MCF 10A (cell line): ENCODE measurements at regions of chr3 and their contacts with region 1.

Region 1: GRCh38 chr3:3200632-3201212 is 21.2 kb upstream of the CRBN start:
- DNase-seq: peak; percentile 81
- H3K4me3 Mint-ChIP-seq: no peak overlapping the region
- H3K27ac Mint-ChIP-seq: no peak overlapping the region
- H3K4me1 Mint-ChIP-seq: no peaks in the 10 kb centered on the region
- H3K27me3 Mint-ChIP-seq: peaks cover 13% of the 10 kb centered on the region
- CTCF ChIP-seq: peak; percentile 80

Region 2: DNA sequence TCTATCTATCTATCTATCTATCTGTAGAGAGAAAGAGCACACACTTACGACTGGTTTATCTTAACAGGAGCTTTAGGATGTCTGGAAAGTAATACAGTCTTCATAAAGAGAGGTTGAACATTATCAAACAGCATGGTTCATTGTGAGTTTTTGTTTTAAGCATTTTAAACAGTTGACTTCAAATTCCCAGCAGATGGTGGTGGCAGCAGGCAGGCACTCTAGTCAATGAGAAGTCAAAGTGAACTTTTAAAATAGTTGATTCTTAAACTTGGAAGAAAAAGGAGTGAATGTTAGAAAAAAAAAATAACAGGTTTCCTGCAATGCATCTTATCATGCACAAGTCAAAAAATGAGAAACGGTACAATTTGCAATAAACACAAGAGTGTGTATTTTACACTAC is 523.2 kb before region 1 on chr3:
- CTCF ChIA-PET with region 1: no interaction called
- POLR2A ChIA-PET with region 1: no interaction called
- intact Hi-C with region 1: no loop called
- DNase-seq: no peak
- H3K4me3 Mint-ChIP-seq: no peak overlapping the region
- H3K27ac Mint-ChIP-seq: no peak overlapping the region
- H3K4me1 Mint-ChIP-seq: no peaks in the 10 kb centered on the region
- H3K27me3 Mint-ChIP-seq: peaks cover 42% of the 10 kb centered on the region
- CTCF ChIP-seq: no peak

Region 3: GRCh38 chr3:3227640-3228039 is 26.9 kb after region 1 on chr3:
- CTCF ChIA-PET with region 1: interaction called, 10 read pairs
- POLR2A ChIA-PET with region 1: no interaction called
- intact Hi-C with region 1: no loop called
- DNase-seq: no peak
- H3K4me3 Mint-ChIP-seq: no peak overlapping the region
- H3K27ac Mint-ChIP-seq: no peak overlapping the region
- H3K4me1 Mint-ChIP-seq: no peaks in the 10 kb centered on the region
- H3K27me3 Mint-ChIP-seq: peaks cover 6% of the 10 kb centered on the region
- CTCF ChIP-seq: no peak

Region 4: GRCh38 chr3:3998140-3998922 is 797.6 kb after region 1 on chr3:
- CTCF ChIA-PET with region 1: interaction called, 176 read pairs
- POLR2A ChIA-PET with region 1: interaction called, 8 read pairs
- intact Hi-C with region 1: loop called (anchors 1 kb)
- DNase-seq: peak; percentile 61
- H3K4me3 Mint-ChIP-seq: no peak overlapping the region
- H3K27ac Mint-ChIP-seq: no peak overlapping the region
- H3K4me1 Mint-ChIP-seq: no peaks in the 10 kb centered on the region
- H3K27me3 Mint-ChIP-seq: no peaks in the 10 kb centered on the region
- CTCF ChIP-seq: peak; percentile 67

Region 5: GRCh38 chr3:4030624-4031023 is 829.9 kb after region 1 on chr3:
- CTCF ChIA-PET with region 1: interaction called, 10 read pairs
- POLR2A ChIA-PET with region 1: no interaction called
- intact Hi-C with region 1: no loop called
- DNase-seq: no peak
- H3K4me3 Mint-ChIP-seq: no peak overlapping the region
- H3K27ac Mint-ChIP-seq: no peak overlapping the region
- H3K4me1 Mint-ChIP-seq: no peaks in the 10 kb centered on the region
- H3K27me3 Mint-ChIP-seq: no peaks in the 10 kb centered on the region
- CTCF ChIP-seq: no peak

Region 6: DNA sequence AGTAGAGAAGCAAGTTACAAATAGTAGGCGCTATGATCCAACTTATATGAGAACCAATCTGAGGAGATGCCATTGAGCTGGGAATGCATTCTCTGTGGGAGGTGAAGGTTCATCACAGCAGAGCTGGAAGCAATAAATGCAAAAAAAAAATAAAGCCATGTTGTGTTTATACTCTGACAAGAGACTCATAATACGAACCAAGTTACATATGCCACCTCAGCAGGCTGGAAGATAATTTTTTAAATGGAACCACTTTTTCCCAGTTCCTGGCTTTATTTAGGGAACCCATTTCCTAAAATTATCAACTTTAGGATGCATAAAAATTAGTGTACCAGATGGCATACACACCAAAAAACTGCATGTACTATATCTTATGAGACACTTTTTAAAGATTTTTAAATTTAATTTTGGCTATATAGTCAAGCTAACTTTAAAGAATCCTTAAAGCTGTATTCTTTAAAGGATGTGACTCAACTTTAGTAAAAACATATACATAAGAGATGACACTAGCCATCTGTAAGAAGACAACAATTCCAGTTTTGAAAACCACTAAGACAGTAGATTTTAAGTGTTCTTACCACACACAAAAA is 1078.9 kb after region 1 on chr3:
- CTCF ChIA-PET with region 1: interaction called, 73 read pairs
- POLR2A ChIA-PET with region 1: no interaction called
- intact Hi-C with region 1: no loop called
- DNase-seq: no peak
- H3K4me3 Mint-ChIP-seq: no peak overlapping the region
- H3K27ac Mint-ChIP-seq: no peak overlapping the region
- H3K4me1 Mint-ChIP-seq: no peaks in the 10 kb centered on the region
- H3K27me3 Mint-ChIP-seq: peaks cover 33% of the 10 kb centered on the region
- CTCF ChIP-seq: no peak

Region 7: GRCh38 chr3:4290272-4290893 is 1089.7 kb after region 1 on chr3:
- CTCF ChIA-PET with region 1: interaction called, 73 read pairs
- POLR2A ChIA-PET with region 1: interaction called, 4 read pairs
- intact Hi-C with region 1: loop called (anchors 1 kb)
- DNase-seq: peak; percentile 58
- H3K4me3 Mint-ChIP-seq: no peak overlapping the region
- H3K27ac Mint-ChIP-seq: no peak overlapping the region
- H3K4me1 Mint-ChIP-seq: no peaks in the 10 kb centered on the region
- H3K27me3 Mint-ChIP-seq: peaks cover 7% of the 10 kb centered on the region
- CTCF ChIP-seq: peak; percentile 77